Uterus (tissue), 4 donors: ENCODE measurements at regions of chr15 and their contacts with region 1.

Region 1: GRCh38 chr15:63402498-63403253 is 21.0 kb upstream of the CA12 start:
- DNase-seq: no peak
- H3K4me3 ChIP-seq: no peak overlapping the region
- H3K27ac ChIP-seq: no peak overlapping the region
- H3K4me1 ChIP-seq: no peaks in the 10 kb centered on the region
- H3K27me3 ChIP-seq: no peaks in the 10 kb centered on the region
- CTCF ChIP-seq: peak; percentile 63 to 74 (median 71)
- POLR2A ChIP-seq: no peak

Region 2: GRCh38 chr15:63288778-63289378 is 113.8 kb before region 1 on chr15:
- intact Hi-C with region 1: loop called (anchors 5 kb)
- DNase-seq: no peak
- H3K4me3 ChIP-seq: no peak overlapping the region
- H3K27ac ChIP-seq: no peak overlapping the region
- H3K4me1 ChIP-seq: no peaks in the 10 kb centered on the region
- H3K27me3 ChIP-seq: no peaks in the 10 kb centered on the region
- CTCF ChIP-seq: peak; percentile 62 to 72 (median 70)
- POLR2A ChIP-seq: no peak

Region 3: DNA sequence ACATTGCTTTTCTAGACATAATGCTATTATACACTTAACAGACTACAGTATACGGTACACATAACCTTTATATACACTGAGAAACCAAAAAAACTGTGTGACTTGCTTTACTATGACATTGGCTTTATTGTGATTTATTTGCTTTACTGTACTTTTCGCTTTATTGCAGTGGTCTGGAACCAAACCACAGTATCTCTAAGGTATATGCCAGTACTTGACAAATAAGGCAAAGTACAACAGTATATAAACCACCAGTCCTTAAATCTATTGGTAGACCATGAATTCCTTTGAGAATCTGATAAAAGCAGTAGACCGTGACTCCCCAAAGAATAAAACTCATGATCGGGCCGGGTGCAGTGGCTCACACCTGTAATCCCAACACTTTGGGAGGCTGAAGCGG is 380.8 kb after region 1 on chr15:
- intact Hi-C with region 1: no loop called
- DNase-seq: no peak
- H3K4me3 ChIP-seq: no peak overlapping the region
- H3K27ac ChIP-seq: no peak overlapping the region
- H3K4me1 ChIP-seq: no peaks in the 10 kb centered on the region
- H3K27me3 ChIP-seq: no peaks in the 10 kb centered on the region
- CTCF ChIP-seq: no peak
- POLR2A ChIP-seq: no peak